ENCODE measurements at regions of chr7 and their contacts with region 1.

Region 1: DNA sequence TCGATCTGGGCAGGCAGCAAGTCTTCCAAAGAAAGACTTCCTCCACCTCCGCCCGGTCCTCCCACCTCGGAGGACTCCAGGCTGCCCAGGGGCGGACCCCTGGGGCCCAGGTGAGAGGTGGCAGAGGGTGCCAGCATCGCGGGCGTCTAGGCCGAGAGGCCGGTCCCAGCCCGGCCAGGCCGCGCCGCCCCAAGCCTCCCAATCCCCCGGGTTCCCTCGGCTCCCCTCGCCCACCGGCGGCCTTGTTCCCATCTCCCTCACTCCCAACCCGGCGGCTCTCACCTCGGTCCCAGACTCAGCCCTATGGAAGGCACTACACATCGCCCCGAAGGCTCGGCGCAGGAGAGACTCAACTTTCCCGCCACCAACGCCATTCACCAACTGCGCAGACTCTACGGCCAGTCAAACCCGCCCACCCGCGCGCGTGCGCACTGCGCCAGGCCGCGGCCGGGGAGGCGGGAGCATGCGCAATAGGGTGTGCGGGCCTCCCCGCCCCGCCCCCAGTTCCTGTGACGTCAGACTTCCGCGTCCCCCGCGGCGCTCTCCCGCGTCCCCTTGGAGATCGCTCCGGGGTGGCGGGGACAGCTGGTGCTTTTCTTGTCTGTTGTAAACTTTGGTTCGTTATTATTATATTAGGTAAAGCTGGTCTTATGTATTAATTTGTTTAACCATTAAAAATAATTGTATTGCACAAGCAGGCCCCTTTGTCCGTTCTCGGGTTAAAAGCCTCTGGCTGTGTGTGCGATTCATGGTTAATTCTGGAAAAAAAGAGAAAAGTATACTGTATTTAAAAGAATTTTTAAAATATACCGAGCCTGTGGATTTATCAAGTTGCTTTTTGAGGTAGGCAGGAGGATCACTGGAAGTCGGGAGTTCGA is at the start of gene XRCC2:
- DNase-seq: peak; percentile 99
- CTCF ChIP-seq: no peak

Region 2: GRCh38 chr7:152336754-152337368 is 339.1 kb before region 1 on chr7:
- in situ Hi-C with region 1: loop called (anchors 25 kb)
- DNase-seq: peak; percentile 35
- CTCF ChIP-seq: peak; percentile 42

Region 3: DNA sequence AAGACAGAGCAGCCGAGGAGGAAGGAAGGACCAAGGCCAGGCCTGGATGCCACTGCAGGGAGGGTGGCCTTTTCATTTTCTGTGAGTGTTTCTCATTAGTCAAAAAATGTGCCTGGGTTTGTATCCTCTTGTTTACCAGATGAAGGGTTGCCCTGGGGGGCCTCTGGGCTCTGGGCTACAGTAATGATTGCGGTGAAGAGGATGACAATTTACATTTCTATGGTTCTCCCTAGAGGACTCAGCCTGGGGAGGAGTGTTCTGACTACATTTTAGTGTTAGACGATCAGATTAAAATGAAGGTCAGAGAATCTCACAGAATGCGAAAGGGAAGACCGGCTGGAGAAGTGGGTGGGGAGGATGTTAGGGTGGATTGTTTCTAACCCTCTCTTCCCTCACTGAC is 132.2 kb before region 1 on chr7:
- in situ Hi-C with region 1: no loop called
- DNase-seq: no peak
- CTCF ChIP-seq: no peak

Region 4: DNA sequence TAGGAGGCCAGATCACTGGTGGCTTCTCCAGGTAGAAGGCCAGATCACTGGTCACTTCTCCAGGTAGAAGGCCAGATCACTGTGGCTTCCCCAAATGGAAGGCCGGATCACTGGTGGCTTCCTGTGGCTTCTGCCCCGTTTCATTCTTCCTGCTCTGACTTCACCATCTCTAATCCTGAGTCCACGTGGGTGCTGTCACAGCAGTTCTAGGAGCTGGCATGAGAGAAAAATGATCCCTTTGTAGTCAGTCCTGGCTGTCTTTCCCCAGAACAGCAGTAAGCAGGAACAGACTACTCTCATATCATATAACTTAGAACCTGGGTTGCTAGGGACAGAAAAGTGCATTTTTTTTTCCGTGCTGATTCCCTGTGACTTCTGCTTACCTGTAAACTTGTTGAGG is 174.4 kb after region 1 on chr7:
- in situ Hi-C with region 1: no loop called
- DNase-seq: no peak
- CTCF ChIP-seq: no peak

Region 5: DNA sequence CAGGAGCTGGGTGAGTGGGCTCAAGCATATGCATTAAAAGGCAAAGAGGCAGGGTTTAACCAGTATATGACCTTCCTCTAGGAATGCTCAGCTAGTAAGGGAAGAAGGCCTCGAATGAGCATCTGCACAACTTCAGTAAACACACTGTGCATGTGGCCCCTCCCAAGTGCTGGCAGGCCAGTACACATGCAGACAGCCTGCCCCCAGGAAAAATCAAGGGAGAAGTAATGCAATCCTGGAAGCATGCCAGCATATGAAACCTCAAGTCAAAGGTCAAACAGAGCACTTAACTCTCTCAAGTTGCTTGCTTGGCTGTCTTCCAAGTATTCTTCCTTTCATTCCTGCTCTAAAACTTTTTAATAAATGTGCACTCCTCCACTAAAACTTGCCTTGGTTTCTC is 292.0 kb after region 1 on chr7:
- in situ Hi-C with region 1: no loop called
- DNase-seq: no peak
- CTCF ChIP-seq: no peak

Measured in GM13976 (cell line).